Right lobe of liver (tissue), 6 donors: ENCODE measurements at regions of chr6 and their contacts with region 1.

Region 1: GRCh38 chr6:12595161-12595811 is 121.3 kb upstream of the PHACTR1 start:
- DNase-seq: no peak
- ATAC-seq: peak in 1 of 4 donors; percentile 32
- H3K4me3 ChIP-seq: no peak overlapping the region
- H3K27ac ChIP-seq: no peak overlapping the region
- H3K4me1 ChIP-seq: no peaks in the 10 kb centered on the region
- H3K27me3 ChIP-seq: no peaks in the 10 kb centered on the region
- CTCF ChIP-seq: no peak
- POLR2A ChIP-seq: no peak

Region 2: GRCh38 chr6:11779329-11780096 is 815.8 kb before region 1 on chr6:
- intact Hi-C with region 1: loop called in 1 of 2 experiments (anchors 5 kb)
- DNase-seq: peak in 1 of 3 donors; percentile 29
- ATAC-seq: peak in 2 of 4 donors; percentile 25 to 43
- H3K4me3 ChIP-seq: no peak overlapping the region
- H3K27ac ChIP-seq: no peak overlapping the region
- H3K4me1 ChIP-seq: no peaks in the 10 kb centered on the region
- H3K27me3 ChIP-seq: no peaks in the 10 kb centered on the region
- CTCF ChIP-seq: no peak
- POLR2A ChIP-seq: no peak

Region 3: GRCh38 chr6:13065581-13065980 is 470.3 kb after region 1 on chr6:
- intact Hi-C with region 1: no loop called
- DNase-seq: no peak
- ATAC-seq: no peak
- H3K4me3 ChIP-seq: no peak overlapping the region
- H3K27ac ChIP-seq: no peak overlapping the region
- H3K4me1 ChIP-seq: no peaks in the 10 kb centered on the region
- H3K27me3 ChIP-seq: no peaks in the 10 kb centered on the region
- CTCF ChIP-seq: no peak
- POLR2A ChIP-seq: no peak